ENCODE measurements at regions of chr3 and their contacts with region 1.

Region 1: DNA sequence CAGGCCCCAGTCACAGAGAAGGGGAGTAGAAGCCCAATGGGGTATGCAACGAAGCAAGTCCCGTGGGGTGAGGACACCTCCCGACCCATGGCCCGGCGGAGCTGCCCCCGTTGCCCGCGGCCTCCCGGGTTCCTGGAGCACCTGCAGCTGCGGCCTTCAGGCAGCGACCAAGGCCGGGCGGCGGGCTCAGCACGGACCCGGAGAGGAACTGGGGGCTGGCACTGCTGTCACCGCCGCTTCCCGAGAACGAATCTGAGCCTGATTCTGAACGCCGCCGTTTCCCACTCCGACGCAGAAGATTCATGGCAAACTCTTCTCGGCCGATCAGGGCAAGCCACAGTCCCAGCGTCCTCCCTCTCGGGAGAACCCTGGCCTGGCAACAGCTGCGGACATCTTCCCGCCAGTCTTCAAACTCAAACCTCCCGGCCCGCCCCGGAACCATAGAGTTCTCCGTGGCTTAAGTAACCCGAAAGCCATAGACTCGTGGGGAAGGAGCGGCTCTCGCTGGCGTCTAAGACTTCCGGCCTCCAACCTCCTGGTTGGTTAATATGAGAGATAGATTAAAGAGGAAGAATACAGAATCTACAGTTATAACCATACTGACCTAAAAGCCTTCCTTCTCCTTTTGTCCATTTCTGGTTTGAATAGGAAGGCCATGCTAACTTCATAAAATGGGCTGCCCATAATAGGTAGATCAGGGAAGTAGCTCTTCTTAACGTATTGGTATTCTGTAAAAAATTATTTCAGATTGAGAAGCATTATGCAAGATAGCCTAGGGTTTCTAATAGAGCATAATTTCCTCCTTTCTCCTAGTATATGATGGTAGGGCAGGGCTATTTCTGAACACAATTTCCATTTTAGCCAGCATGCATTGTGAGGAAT is at the start of gene POLQ:
- DNase-seq: peak; percentile 88
- H3K4me3 ChIP-seq: peak within 1 kb of the TSS; percentile 70
- H3K27ac ChIP-seq: peak within 1 kb of the TSS; percentile 79
- H3K4me1 ChIP-seq: peaks cover 13% of the 10 kb centered on the region
- H3K27me3 ChIP-seq: no peaks in the 10 kb centered on the region
- CTCF ChIP-seq: no peak
- total RNA-seq, gene POLQ: 0.38 TPM

Region 2: DNA sequence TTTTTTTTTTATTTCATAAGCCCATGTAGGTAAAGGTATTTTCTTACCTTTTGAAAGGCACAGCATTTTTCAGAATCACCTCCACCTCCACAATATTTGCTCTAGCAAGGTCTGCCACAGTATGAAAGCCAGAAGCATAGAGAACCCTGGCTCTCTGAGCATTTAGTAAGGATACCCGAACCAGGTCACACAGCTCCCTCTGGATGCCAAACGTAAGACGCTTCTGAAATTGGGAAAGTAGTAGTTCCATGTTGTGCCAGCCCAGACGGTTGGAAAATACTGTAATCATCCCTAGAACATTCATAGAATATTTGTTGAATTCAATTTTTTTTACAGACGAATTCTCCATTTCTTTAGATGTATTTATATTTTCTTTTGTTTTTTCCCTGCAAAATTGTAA is 52.4 kb before region 1 on chr3:
- intact Hi-C with region 1: no loop called
- DNase-seq: no peak
- H3K4me3 ChIP-seq: no peak overlapping the region
- H3K27ac ChIP-seq: no peak overlapping the region
- H3K4me1 ChIP-seq: no peaks in the 10 kb centered on the region
- H3K27me3 ChIP-seq: no peaks in the 10 kb centered on the region
- CTCF ChIP-seq: no peak

Region 3: DNA sequence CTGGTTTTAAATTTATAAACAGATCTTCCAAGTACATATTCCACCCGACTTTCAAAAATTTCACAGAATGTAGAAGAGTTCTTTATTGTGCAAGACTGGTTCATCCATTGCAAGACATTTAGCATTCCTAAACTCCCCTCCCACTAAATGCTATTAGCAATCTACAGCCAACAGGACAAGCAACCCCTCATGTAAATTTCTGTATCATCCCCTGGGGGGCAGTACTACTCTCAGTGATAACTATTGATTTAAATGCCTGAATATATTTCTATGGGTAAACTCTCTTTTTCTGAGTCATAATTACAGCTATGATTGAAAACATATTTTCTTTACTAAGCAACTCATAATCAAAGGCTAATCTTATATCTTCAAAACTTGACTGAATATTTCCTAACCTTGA is 337.7 kb after region 1 on chr3:
- intact Hi-C with region 1: no loop called
- DNase-seq: no peak
- H3K4me3 ChIP-seq: no peak overlapping the region
- H3K27ac ChIP-seq: no peak overlapping the region
- H3K4me1 ChIP-seq: no peaks in the 10 kb centered on the region
- H3K27me3 ChIP-seq: no peaks in the 10 kb centered on the region
- CTCF ChIP-seq: peak; percentile 36

Region 4: DNA sequence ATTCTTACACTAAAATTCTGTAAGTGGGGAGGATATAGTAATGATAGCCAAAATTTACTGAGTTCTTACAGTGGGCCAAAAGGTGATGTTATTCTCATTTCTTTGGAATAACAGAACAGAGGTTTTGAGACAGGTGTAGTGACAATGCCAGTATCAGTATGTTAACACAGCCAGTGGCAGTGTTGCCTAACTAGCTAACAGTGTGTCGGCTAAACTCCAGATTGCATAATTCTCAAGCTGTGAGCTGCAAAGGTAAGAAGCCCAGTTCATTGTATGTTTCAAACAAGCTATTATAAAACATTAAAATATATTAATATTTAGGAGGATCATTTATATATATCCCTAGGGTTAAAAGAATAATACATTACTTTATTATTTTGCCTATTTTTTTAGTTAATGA is 349.3 kb after region 1 on chr3:
- intact Hi-C with region 1: no loop called
- DNase-seq: no peak
- H3K4me3 ChIP-seq: peak overlapping the region; percentile 53
- H3K27ac ChIP-seq: peak overlapping the region; percentile 62
- H3K4me1 ChIP-seq: peaks cover 22% of the 10 kb centered on the region
- H3K27me3 ChIP-seq: no peaks in the 10 kb centered on the region
- CTCF ChIP-seq: no peak

Region 5: DNA sequence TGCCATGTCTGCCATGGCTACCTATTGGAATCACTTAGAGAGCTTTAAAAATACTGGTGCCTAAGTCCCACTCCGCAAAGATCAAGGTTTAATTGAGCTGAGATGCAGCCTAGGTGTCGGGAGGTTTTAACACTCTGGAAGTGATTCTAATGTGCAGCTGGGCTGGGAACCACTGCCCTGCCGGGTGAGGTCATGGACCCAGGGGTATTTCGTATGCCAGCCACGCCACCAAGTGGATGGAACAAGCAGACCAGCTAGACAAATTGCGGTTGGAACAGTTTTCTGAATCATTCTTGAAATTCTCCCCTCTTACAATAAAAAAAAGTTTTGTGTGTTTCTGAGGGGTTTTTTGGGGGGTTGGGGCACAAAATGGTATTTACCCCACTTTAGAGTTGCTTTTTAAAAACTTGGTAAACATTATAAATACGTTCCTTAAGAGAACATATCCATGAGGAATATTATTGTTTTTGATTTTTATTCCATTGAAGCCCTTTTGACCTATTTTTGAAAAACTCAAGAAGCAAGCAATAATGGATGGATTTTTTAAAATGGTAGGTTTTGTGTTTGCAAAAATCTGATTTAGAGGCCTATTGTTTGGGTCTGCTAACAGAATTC is 713.0 kb after region 1 on chr3:
- intact Hi-C with region 1: loop called (anchors 5 kb)
- DNase-seq: peak; percentile 74
- H3K4me3 ChIP-seq: no peak overlapping the region
- H3K27ac ChIP-seq: no peak overlapping the region
- H3K4me1 ChIP-seq: peaks cover 10% of the 10 kb centered on the region
- H3K27me3 ChIP-seq: peaks cover 3% of the 10 kb centered on the region
- CTCF ChIP-seq: peak; percentile 70

Measured in left ventricle myocardium inferior (tissue), 1 donor.